MCF 10A (cell line): ENCODE measurements at regions of chr9 and their contacts with region 1.

Region 1: DNA sequence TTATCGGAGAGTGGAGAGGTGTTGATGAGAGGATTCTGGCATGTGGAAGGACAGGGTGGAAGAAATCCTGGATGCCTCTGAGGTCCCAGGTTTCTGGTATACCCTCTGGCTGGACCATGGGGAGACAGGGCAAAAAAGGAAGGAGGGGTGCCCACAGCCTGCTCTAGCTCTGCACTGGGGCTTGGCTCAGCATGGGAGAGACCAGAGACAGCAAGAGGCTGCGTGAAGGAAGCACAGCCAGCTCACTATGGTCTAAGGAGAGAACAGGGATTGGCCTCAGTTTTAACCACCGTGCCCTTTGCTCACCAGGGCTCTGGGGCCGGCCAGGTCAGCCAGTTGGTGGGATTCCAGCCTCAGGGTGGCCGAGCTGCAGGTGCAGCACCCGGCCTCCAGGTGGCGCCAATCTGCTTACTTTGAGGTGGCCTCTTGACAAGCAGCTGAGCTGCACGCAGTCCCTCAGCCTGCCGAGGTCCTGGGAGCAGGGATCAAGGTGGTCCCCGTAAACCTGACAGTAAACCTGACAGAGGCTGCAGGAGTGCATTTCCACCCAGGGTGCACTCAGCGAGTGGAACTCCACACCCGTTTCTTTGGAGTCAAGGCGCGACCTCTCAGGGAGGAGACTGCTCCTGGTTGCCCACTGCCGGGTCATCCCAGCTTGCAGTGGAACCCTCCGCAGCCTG is 25.0 kb upstream of the SPTLC1 start:
- DNase-seq: peak; percentile 72
- H3K4me3 Mint-ChIP-seq: peak overlapping the region; percentile 35
- H3K27ac Mint-ChIP-seq: no peak overlapping the region
- H3K4me1 Mint-ChIP-seq: peaks cover 15% of the 10 kb centered on the region
- H3K27me3 Mint-ChIP-seq: no peaks in the 10 kb centered on the region
- CTCF ChIP-seq: peak; percentile 91

Region 2: GRCh38 chr9:91836515-91836914 is 303.7 kb before region 1 on chr9:
- CTCF ChIA-PET with region 1: no interaction called
- POLR2A ChIA-PET with region 1: no interaction called
- intact Hi-C with region 1: no loop called
- DNase-seq: no peak
- H3K4me3 Mint-ChIP-seq: no peak overlapping the region
- H3K27ac Mint-ChIP-seq: no peak overlapping the region
- H3K4me1 Mint-ChIP-seq: peaks cover 9% of the 10 kb centered on the region
- H3K27me3 Mint-ChIP-seq: peaks cover 3% of the 10 kb centered on the region
- CTCF ChIP-seq: no peak

Region 3: DNA sequence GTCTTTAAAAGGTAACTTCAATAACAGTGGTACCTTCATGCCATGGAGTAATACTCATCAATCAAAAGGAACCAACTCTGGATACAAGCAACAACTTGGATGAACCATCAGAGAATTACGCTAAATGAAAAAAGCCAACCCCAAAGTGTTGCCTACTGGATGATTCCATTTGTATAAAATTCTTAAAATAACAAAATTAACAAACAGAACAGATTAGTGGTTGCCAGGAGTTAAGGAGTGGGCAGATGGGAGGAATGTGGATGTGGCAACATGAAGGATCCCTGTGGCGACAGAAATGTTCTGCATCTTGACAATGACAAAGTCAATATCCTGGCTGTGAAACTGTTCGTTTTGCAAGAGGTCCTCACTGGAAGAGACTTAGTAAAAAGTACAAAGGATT is 75.5 kb before region 1 on chr9:
- CTCF ChIA-PET with region 1: no interaction called
- POLR2A ChIA-PET with region 1: no interaction called
- intact Hi-C with region 1: no loop called
- DNase-seq: peak; percentile 64
- H3K4me3 Mint-ChIP-seq: no peak overlapping the region
- H3K27ac Mint-ChIP-seq: peak overlapping the region; percentile 87
- H3K4me1 Mint-ChIP-seq: peaks cover 8% of the 10 kb centered on the region
- H3K27me3 Mint-ChIP-seq: no peaks in the 10 kb centered on the region
- CTCF ChIP-seq: no peak

Region 4: GRCh38 chr9:92180669-92181181 is 40.5 kb after region 1 on chr9:
- CTCF ChIA-PET with region 1: interaction called, 11 read pairs
- POLR2A ChIA-PET with region 1: no interaction called
- intact Hi-C with region 1: no loop called
- DNase-seq: peak; percentile 56
- H3K4me3 Mint-ChIP-seq: no peak overlapping the region
- H3K27ac Mint-ChIP-seq: no peak overlapping the region
- H3K4me1 Mint-ChIP-seq: peaks cover 5% of the 10 kb centered on the region
- H3K27me3 Mint-ChIP-seq: peaks cover 17% of the 10 kb centered on the region
- CTCF ChIP-seq: no peak

Region 5: GRCh38 chr9:92223758-92224157 is 83.5 kb after region 1 on chr9:
- CTCF ChIA-PET with region 1: interaction called, 28 read pairs
- POLR2A ChIA-PET with region 1: no interaction called
- intact Hi-C with region 1: no loop called
- DNase-seq: no peak
- H3K4me3 Mint-ChIP-seq: no peak overlapping the region
- H3K27ac Mint-ChIP-seq: peak overlapping the region; percentile 21
- H3K4me1 Mint-ChIP-seq: no peaks in the 10 kb centered on the region
- H3K27me3 Mint-ChIP-seq: no peaks in the 10 kb centered on the region
- CTCF ChIP-seq: no peak

Region 6: DNA sequence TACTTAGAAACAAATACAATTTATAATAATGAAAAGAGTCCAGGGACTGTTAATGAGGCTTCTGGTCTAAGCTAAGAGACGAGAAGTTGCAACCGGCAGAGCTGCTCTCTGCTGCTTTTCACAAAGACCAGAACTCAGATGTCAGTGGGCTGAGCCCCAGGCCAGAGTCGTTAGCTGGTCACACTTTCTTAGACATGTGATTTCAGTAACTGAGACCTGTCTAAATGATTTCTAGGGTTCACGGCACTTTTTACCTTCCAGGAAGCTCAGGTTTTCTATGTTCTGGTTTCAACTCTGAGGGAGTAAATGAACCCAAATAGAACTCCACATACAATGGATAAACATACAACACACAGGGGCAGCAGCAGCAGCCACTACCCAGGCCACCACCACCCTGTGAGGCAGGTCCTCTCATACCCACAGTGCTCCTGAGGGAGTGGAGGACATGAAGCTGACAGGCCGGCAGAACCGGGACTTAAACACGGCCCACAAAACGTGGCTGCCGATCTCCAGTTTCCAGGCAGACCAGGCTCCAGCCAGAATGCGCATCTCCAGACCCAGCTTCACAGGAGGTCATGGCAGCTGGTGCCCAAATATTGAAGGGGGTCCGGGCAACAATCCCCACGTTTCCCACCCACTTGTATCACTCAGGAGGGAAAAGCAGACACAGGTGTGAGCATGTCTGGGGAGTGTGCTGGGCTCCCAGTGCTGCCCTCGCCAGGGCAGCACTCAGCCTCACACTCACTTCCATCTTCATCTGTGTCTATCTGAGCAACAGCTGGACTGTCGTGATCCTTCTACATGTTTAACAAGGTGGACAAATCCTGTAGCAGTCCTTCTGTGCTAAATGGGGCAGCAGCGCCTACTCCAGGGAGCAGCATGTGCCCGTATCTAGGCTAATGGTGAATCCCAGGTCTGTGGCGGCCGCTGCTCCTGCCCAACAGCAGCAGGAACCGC is 114.4 kb after region 1 on chr9:
- CTCF ChIA-PET with region 1: interaction called, 74 read pairs
- POLR2A ChIA-PET with region 1: interaction called, 3 read pairs
- intact Hi-C with region 1: no loop called
- DNase-seq: no peak
- H3K4me3 Mint-ChIP-seq: no peak overlapping the region
- H3K27ac Mint-ChIP-seq: no peak overlapping the region
- H3K4me1 Mint-ChIP-seq: no peaks in the 10 kb centered on the region
- H3K27me3 Mint-ChIP-seq: no peaks in the 10 kb centered on the region
- CTCF ChIP-seq: no peak

Region 7: GRCh38 chr9:92293452-92294296 is 153.5 kb after region 1 on chr9 and contains the start of gene IARS1:
- CTCF ChIA-PET with region 1: interaction called, 18 read pairs
- POLR2A ChIA-PET with region 1: interaction called, 3 read pairs
- intact Hi-C with region 1: loop called (anchors 1 kb)
- DNase-seq: peak; percentile 98
- H3K4me3 Mint-ChIP-seq: peak within 1 kb of the TSS; percentile 80
- H3K27ac Mint-ChIP-seq: peak within 1 kb of the TSS; percentile 96
- H3K4me1 Mint-ChIP-seq: peaks cover 27% of the 10 kb centered on the region
- H3K27me3 Mint-ChIP-seq: no peaks in the 10 kb centered on the region
- CTCF ChIP-seq: no peak
- total RNA-seq, gene IARS1: 390 and 403 TPM in 2 replicates